ENCODE measurements at regions of chrX and their contacts with region 1.

Region 1: GRCh38 chrX:24647257-24648058 is at the start of gene PCYT1B:
- DNase-seq: peak; percentile 15 to 60 (median 51)
- ATAC-seq: peak; percentile 99
- H3K4me3 ChIP-seq: peak within 1 kb of the TSS; percentile 43
- H3K4me3 Mint-ChIP-seq: peak within 1 kb of the TSS; percentile 72 to 88 (median 82)
- H3K27ac ChIP-seq: no peak within 1 kb of the TSS
- H3K27ac Mint-ChIP-seq: peak within 1 kb of the TSS in 5 of 9 donors; percentile 35 to 87 (median 46)
- H3K4me1 ChIP-seq: peaks cover 0 to 4% of the 10 kb centered on the region in 2 donors
- H3K4me1 Mint-ChIP-seq: peaks cover 2 to 20% (median 12%) of the 10 kb centered on the region in 7 donors
- H3K27me3 ChIP-seq: no peaks in the 10 kb centered on the region
- H3K27me3 Mint-ChIP-seq: peaks cover 7 to 28% (median 8%) of the 10 kb centered on the region in 5 donors
- total RNA-seq, gene PCYT1B: 0.05 to 0.12 TPM in 2 of 5 experiments, not detected in the others

Region 2: DNA sequence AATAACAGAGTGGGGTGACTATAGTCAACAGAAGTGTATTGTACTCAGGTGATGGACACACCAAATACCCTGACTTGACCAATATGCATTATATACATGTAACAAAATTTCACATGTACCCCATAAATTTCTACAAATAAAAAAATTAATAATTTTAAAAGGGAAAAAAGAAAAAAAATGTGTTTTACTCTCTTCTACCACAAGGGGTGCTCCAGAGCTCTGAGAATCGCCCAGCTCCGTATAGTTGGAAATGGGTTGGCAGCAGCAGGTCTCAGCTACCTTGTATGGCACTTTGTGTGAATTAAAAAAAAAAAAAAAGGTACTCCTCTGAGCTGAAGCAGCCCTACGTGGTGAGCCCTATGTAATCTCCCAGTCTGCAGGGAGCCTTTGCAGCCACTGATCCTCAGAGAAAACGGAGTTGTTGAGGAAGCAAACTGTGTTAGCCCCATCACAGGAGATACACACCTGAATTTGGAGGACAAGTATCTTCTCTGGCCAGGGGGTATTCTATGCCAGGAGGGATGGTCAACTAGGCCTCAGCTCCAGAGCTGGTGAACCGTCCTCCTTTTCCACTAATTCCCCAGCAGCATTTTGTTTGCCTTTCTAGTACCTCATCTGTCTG is 29.1 kb after region 1 on chrX:
- CTCF ChIA-PET with region 1: no interaction called
- POLR2A ChIA-PET with region 1: no interaction called
- intact Hi-C with region 1: loop called in 1 of 2 experiments (anchors 2 kb)
- DNase-seq: peak in 2 of 9 donors; percentile 7 to 8
- ATAC-seq: peak; percentile 44
- H3K4me3 ChIP-seq: no peak overlapping the region
- H3K4me3 Mint-ChIP-seq: no peak overlapping the region
- H3K27ac ChIP-seq: no peak overlapping the region
- H3K27ac Mint-ChIP-seq: no peak overlapping the region
- H3K4me1 ChIP-seq: no peaks in the 10 kb centered on the region
- H3K4me1 Mint-ChIP-seq: no peaks in the 10 kb centered on the region
- H3K27me3 ChIP-seq: no peaks in the 10 kb centered on the region
- H3K27me3 Mint-ChIP-seq: peaks cover 0 to 4% (median 0%) of the 10 kb centered on the region in 5 donors

Measured in naive thymus-derived CD4-positive, alpha-beta T cell (primary cell).